Left ventricle myocardium superior (tissue), 1 donor: ENCODE measurements at regions of chr2 and their contacts with region 1.

Region 1: DNA sequence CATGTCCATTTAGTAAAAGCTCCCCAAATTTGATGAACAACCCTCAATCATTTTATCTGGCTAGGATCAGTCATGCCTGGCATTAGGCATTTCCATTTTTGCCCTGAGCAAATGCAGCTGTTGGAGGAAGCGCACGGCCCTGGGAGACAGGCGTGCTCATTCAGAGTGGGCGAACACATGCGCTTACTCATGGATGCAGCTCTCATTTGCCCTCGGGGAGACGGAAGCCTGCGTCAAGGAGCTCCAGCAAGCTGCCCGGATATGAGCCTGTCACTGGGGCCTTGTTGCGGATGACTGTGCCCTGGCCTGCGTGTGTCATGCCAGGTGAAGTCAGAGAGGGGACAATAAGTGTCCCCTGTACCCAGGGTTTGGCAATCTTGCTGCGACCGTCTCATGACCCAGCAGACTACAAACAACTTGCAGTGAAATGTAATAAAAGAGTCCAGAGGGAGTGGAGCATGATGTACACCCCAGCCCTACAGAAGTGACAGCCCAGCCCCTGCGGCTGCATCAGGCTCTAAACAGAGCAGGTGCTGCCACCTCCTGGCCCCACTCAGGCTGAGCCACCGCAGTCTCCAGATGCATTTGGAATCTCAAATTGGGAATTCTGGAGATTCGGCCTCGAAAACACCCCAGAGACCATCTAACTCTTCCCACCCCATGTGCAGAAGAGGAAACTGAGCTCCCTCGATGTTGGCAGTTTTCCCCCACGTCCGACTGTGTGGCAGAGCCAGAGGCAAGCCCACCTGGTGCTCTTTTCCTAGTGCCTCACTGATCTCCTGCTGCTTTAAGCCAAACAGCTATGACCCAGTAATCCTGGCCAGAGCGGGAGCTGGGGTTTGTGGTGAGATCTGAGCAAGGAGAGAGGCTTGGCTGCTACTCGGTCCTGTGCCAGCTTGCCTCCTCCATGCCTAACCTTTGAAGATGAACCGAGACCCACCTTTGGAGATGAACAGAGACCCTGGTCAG is 105.0 kb upstream of the ALK start:
- DNase-seq: peak; percentile 67
- ATAC-seq: peak; percentile 77

Region 2: GRCh38 chr2:29615183-29615582 is 411.2 kb before region 1 on chr2:
- intact Hi-C with region 1: no loop called
- DNase-seq: no peak
- ATAC-seq: no peak

Region 3: GRCh38 chr2:29923110-29923721 is 103.2 kb before region 1 on chr2:
- intact Hi-C with region 1: loop called (anchors 5 kb)
- DNase-seq: peak; percentile 70
- ATAC-seq: peak; percentile 29

Region 4: GRCh38 chr2:30072250-30072842 is 46.0 kb after region 1 on chr2:
- intact Hi-C with region 1: no loop called
- DNase-seq: peak; percentile 45
- ATAC-seq: peak; percentile 90